Activated naive CD4-positive, alpha-beta T cell treated with anti-CD3 and anti-CD28 coated beads, Interleukin-2, amount 10 ng/mL, durations not matched to agents 7 days and 5 days (primary cell): ENCODE measurements at regions of chr3 and their contacts with region 1.

Region 1: DNA sequence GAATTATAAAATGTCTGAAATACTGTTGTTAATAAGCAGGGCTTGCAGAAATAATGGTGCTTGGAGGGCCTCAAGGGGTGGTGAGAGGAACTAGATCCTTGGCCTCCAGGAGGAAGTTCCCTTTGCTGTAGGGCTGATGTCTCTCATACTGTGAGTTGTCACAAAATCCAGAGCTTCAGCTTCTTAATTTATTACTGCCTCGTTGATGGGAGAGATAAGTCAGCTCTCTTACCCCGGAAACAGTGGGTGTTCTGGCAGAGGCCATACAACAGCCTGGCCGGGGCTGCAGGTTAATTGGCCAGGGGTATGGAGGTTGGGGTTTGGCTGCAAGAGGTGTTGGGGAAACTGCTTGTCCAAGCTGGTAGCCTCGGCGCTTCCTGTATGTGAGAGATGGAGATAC is 15.5 kb downstream of the MAPKAPK3 start:
- DNase-seq: no peak
- H3K4me3 Mint-ChIP-seq: no peak overlapping the region
- H3K27ac Mint-ChIP-seq: peak overlapping the region; percentile 84
- H3K4me1 Mint-ChIP-seq: peaks cover 89% of the 10 kb centered on the region
- H3K27me3 Mint-ChIP-seq: no peaks in the 10 kb centered on the region

Region 2: GRCh38 chr3:50652709-50653108 is 20.3 kb after region 1 on chr3:
- CTCF ChIA-PET with region 1: interaction called, 10 read pairs
- DNase-seq: peak; percentile 74
- H3K4me3 Mint-ChIP-seq: no peak overlapping the region
- H3K27ac Mint-ChIP-seq: no peak overlapping the region
- H3K4me1 Mint-ChIP-seq: peaks cover 26% of the 10 kb centered on the region
- H3K27me3 Mint-ChIP-seq: no peaks in the 10 kb centered on the region